Activated B cell treated with CpG ODN at 0.5 μM for 24 hours (primary cell): ENCODE measurements at regions of chr10 and their contacts with region 1.

Region 1: DNA sequence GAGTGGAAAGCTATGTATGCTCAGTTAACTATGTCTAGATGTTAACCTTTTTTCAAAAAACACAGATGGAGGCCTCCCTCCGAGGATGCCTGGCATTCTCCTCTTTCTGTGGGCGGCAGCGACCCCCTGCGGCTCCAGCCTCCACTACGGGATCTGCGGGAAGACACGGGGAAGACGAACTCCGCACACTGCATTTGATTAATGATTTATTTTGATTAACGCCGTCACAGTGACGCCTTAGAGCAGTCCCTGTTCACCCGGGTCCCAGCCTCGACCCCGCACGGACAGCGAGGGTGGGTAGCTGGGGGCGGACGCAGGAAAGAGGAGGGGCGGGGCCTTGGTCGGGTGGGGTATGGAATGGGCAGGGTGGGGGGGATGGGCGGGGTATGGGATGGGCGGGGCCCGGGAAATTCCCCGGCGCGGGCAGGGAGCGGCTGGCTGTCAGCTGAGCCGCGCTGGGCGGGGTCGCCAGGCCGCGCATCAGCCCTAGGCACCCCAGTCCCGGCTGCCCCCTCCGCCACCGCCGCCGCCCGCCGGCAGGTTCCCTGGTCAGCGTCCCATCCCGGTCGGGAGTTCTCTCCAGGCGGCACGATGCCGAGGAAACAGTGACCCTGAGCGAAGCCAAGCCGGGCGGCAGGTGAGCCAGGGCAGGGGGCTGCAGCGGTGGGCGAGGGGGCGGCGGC is at the start of gene OPTN:
- DNase-seq: peak; percentile 71
- ATAC-seq: peak; percentile 81
- H3K4me3 Mint-ChIP-seq: peak within 1 kb of the TSS; percentile 92
- H3K27ac Mint-ChIP-seq: peak within 1 kb of the TSS; percentile 84
- H3K4me1 Mint-ChIP-seq: peaks cover 15% of the 10 kb centered on the region
- H3K27me3 Mint-ChIP-seq: no peaks in the 10 kb centered on the region
- CTCF ChIP-seq: no peak
- total RNA-seq, gene OPTN: 34.9 and 35.4 TPM in 2 replicates

Region 2: DNA sequence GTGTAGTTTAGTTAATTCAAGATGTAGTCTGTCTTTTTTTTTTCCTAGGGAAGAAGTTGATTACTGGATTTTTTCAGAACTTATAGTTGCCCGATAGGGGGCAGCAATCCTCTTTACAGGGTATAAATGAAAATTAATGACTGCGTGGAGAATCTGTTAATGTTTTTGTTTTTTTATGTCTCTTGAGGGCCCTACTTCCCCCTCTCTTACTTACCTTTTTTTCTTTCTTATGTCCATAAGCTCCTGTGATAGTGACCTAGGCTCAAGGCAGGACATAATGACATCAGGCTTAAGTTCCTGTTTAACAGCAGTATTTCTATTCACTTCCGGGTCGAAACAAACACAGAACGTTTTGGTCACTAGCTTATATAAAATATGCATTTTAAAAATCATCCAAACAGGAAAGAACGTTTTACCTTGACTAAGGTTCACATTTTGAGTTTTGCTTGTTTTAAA is 885.0 kb before region 1 on chr10:
- CTCF ChIA-PET with region 1: no interaction called
- POLR2A ChIA-PET with region 1: no interaction called
- intact Hi-C with region 1: loop called (anchors 5 kb)
- DNase-seq: no peak
- ATAC-seq: peak; percentile 42
- H3K4me3 Mint-ChIP-seq: peak overlapping the region; percentile 78
- H3K27ac Mint-ChIP-seq: peak overlapping the region; percentile 88
- H3K4me1 Mint-ChIP-seq: peaks cover 19% of the 10 kb centered on the region
- H3K27me3 Mint-ChIP-seq: no peaks in the 10 kb centered on the region
- CTCF ChIP-seq: peak; percentile 66

Region 3: GRCh38 chr10:12656518-12657142 is 443.2 kb before region 1 on chr10:
- CTCF ChIA-PET with region 1: no interaction called
- POLR2A ChIA-PET with region 1: no interaction called
- intact Hi-C with region 1: loop called (anchors 2 kb)
- DNase-seq: no peak
- ATAC-seq: peak; percentile 60
- H3K4me3 Mint-ChIP-seq: no peak overlapping the region
- H3K27ac Mint-ChIP-seq: no peak overlapping the region
- H3K4me1 Mint-ChIP-seq: peaks cover 13% of the 10 kb centered on the region
- H3K27me3 Mint-ChIP-seq: no peaks in the 10 kb centered on the region
- CTCF ChIP-seq: no peak

Region 4: GRCh38 chr10:12782537-12782936 is 317.3 kb before region 1 on chr10:
- CTCF ChIA-PET with region 1: no interaction called
- POLR2A ChIA-PET with region 1: no interaction called
- intact Hi-C with region 1: loop called (anchors 1 kb)
- DNase-seq: no peak
- ATAC-seq: no peak
- H3K4me3 Mint-ChIP-seq: no peak overlapping the region
- H3K27ac Mint-ChIP-seq: no peak overlapping the region
- H3K4me1 Mint-ChIP-seq: peaks cover 4% of the 10 kb centered on the region
- H3K27me3 Mint-ChIP-seq: no peaks in the 10 kb centered on the region
- CTCF ChIP-seq: no peak

Region 5: DNA sequence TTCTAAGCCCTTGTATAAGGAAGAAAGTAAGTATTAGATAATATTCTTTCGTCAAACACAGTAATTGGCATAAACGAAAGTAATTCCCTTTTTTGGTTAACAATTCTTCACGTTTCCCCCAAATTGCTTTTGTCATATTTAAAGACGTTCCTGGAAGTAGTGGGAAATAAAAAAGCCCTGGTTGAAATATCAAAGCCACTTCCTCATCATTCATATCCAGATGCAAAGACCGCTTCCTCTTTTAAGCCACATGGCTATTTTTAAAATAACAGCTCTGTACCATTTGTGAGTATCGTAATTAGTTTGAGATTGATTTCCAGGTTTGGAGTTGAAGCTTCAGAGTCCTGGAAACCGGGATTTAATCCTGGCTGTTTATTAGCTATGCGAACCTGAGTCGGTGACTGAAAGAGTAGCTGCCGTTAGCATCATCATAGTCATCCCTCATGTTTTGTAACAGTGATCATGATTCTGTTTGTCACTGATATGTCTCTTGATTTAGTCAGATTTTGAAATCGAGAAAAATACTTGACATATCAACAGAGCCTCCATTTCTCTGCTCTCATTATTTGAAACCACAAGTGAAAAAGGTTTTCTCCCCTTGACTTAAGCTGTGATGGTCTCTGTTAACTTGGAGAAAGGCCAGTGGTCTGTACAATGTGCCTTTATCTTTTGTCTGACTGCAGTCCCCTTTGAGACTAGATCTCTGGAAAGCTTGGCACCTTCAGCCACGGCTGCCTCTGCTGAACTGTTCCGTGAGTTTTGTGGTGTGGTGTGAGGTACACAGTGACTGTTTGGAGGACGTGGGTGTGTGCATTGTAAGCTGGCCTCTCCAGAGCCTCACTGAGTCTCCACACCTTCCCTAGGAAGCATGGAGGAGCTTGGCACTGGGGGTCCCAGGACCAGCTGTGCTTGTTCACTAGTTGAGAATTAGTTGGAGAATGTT is 18.3 kb after region 1 on chr10:
- CTCF ChIA-PET with region 1: interaction called, 4 read pairs
- POLR2A ChIA-PET with region 1: interaction called, 4 read pairs
- intact Hi-C with region 1: loop called (anchors 2 kb)
- DNase-seq: no peak
- ATAC-seq: peak; percentile 40
- H3K4me3 Mint-ChIP-seq: peak overlapping the region; percentile 55
- H3K27ac Mint-ChIP-seq: peak overlapping the region; percentile 46
- H3K4me1 Mint-ChIP-seq: peaks cover 20% of the 10 kb centered on the region
- H3K27me3 Mint-ChIP-seq: no peaks in the 10 kb centered on the region
- CTCF ChIP-seq: no peak

Region 6: DNA sequence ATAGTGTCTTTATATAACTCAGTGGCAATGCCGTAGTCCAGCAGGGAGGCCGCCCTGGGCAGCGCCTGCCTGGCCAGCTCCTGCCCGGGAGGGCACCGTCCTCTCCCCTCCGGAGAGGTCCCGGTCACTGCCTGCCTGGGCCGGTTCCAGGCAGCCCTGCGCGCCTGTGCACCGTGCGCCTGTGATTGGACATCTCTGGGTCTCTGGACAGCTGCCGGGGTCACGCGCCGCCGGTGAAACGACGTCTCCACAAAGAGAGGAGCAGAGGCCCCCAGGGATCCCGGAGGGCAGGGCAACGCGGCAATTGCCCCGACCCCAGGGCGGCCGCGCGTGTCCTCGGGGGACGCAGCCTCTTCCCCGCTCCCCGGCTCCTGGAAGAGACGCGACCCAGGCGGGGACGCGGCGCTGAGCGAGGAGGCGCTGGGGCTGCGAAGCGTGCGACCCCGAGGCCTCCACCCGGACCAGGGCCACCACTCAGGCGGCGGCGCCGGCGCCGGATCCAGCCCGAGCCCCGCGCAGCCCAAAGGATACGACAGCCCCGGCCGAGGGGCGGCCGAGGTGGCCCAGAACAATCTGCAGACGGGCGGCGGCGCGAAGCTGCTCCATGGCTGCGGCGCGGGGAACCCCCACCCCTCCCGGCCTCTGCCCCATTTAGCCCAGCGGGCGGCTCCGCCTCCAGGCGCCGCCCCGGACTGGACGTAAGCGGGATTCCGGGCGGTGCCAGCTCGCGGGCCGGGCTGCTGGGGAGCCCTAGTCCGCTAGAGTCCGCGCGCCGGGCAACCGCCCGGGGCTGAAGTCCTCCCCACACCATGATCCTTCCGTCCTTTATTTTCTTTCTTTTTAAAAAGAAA is 199.9 kb after region 1 on chr10 and contains the start of gene PHYH:
- CTCF ChIA-PET with region 1: no interaction called
- POLR2A ChIA-PET with region 1: interaction called, 4 read pairs
- intact Hi-C with region 1: loop called (anchors 1 kb)
- DNase-seq: peak; percentile 83
- ATAC-seq: peak; percentile 69
- H3K4me3 Mint-ChIP-seq: peak within 1 kb of the TSS; percentile 87
- H3K27ac Mint-ChIP-seq: peak within 1 kb of the TSS; percentile 82
- H3K4me1 Mint-ChIP-seq: peaks cover 27% of the 10 kb centered on the region
- H3K27me3 Mint-ChIP-seq: no peaks in the 10 kb centered on the region
- CTCF ChIP-seq: no peak
- total RNA-seq, gene PHYH: 10.4 and 10.8 TPM in 2 replicates

Region 7: GRCh38 chr10:13536674-13537366 is 437.0 kb after region 1 on chr10:
- CTCF ChIA-PET with region 1: no interaction called
- POLR2A ChIA-PET with region 1: no interaction called
- intact Hi-C with region 1: loop called (anchors 10 kb)
- DNase-seq: no peak
- ATAC-seq: peak; percentile 58
- H3K4me3 Mint-ChIP-seq: no peak overlapping the region
- H3K27ac Mint-ChIP-seq: no peak overlapping the region
- H3K4me1 Mint-ChIP-seq: no peaks in the 10 kb centered on the region
- H3K27me3 Mint-ChIP-seq: peaks cover 45% of the 10 kb centered on the region
- CTCF ChIP-seq: no peak

Region 8: GRCh38 chr10:13613519-13613918 is 513.7 kb after region 1 on chr10:
- CTCF ChIA-PET with region 1: no interaction called
- POLR2A ChIA-PET with region 1: no interaction called
- intact Hi-C with region 1: no loop called
- DNase-seq: no peak
- ATAC-seq: no peak
- H3K4me3 Mint-ChIP-seq: no peak overlapping the region
- H3K27ac Mint-ChIP-seq: no peak overlapping the region
- H3K4me1 Mint-ChIP-seq: no peaks in the 10 kb centered on the region
- H3K27me3 Mint-ChIP-seq: no peaks in the 10 kb centered on the region
- CTCF ChIP-seq: no peak